ENCODE measurements at regions of chr12 and their contacts with region 1.

Region 1: GRCh38 chr12:114166362-114166761 is 200.2 kb upstream of the RBM19 start:
- DNase-seq: peak; percentile 24
- H3K4me3 Mint-ChIP-seq: no peak overlapping the region
- H3K27ac Mint-ChIP-seq: no peak overlapping the region
- H3K4me1 Mint-ChIP-seq: no peaks in the 10 kb centered on the region
- H3K27me3 Mint-ChIP-seq: peaks cover 49% of the 10 kb centered on the region
- CTCF ChIP-seq: no peak

Region 2: DNA sequence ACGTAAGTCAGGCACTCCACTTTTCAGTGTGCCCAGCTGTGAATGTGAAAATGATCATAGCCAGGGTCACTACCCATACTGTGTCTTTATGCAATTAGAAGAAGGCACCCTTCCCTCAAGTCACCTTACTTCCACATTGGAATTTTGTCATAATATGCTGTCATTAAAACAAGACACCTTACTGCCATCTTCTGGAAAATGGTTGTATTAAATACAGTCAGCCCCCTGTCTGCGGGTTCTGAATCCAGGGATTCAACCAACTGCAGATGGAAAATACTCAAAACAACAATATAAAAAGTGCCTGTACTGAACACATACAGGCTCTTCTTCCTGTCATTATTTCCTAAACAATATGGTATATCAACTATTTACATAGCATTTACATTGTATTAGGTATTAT is 309.8 kb after region 1 on chr12:
- CTCF ChIA-PET with region 1: no interaction called
- intact Hi-C with region 1: loop called (anchors 1 kb)
- DNase-seq: no peak
- H3K4me3 Mint-ChIP-seq: no peak overlapping the region
- H3K27ac Mint-ChIP-seq: no peak overlapping the region
- H3K4me1 Mint-ChIP-seq: no peaks in the 10 kb centered on the region
- H3K27me3 Mint-ChIP-seq: peaks cover 20% of the 10 kb centered on the region
- CTCF ChIP-seq: no peak

Region 3: GRCh38 chr12:114508529-114509129 is 342.3 kb after region 1 on chr12:
- CTCF ChIA-PET with region 1: no interaction called
- intact Hi-C with region 1: loop called (anchors 2 kb)
- DNase-seq: peak; percentile 53
- H3K4me3 Mint-ChIP-seq: no peak overlapping the region
- H3K27ac Mint-ChIP-seq: no peak overlapping the region
- H3K4me1 Mint-ChIP-seq: no peaks in the 10 kb centered on the region
- H3K27me3 Mint-ChIP-seq: no peaks in the 10 kb centered on the region
- CTCF ChIP-seq: peak; percentile 45

Measured in Calu3 (cell line).